ENCODE measurements at regions of chr5 and their contacts with region 1.

Region 1: GRCh38 chr5:149990518-149991376 is 9.7 kb downstream of the TIGD6 start:
- H3K4me3 ChIP-seq: no peak overlapping the region
- H3K27ac ChIP-seq: no peak overlapping the region
- H3K4me1 ChIP-seq: 0 out of 2 replicates have a peak, but pooled peaks cover 2% of the 10 kb centered on the region
- CTCF ChIP-seq: peak; percentile 73; the same call in 1 of the 2 replicates

Region 2: DNA sequence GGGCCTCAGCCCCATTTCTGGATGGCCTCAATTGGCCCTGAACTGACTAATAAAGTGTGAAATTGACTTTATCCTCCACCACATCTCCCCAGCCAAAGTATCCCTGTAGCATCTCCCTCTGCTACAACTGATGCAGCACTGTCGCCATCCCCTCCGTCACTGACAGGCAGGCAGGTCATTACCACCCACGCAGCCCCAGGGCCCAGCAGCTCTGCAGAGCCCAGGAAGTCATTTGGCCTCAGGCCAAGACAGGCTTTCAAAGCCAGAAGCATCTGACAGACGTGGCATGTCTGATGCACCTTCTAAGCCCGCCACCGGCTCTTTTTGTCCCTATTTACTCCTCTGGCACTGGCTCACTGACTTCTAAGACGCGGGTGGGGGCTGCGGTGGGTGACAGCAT is 344.2 kb before region 1 on chr5:
- CTCF ChIA-PET with region 1: interaction called, 10 read pairs
- POLR2A ChIA-PET with region 1: no interaction called
- H3K4me3 ChIP-seq: no peak overlapping the region
- H3K27ac ChIP-seq: no peak overlapping the region
- H3K4me1 ChIP-seq: peaks cover 4% of the 10 kb centered on the region; the same call in 1 of the 2 replicates
- CTCF ChIP-seq: no peak

Region 3: DNA sequence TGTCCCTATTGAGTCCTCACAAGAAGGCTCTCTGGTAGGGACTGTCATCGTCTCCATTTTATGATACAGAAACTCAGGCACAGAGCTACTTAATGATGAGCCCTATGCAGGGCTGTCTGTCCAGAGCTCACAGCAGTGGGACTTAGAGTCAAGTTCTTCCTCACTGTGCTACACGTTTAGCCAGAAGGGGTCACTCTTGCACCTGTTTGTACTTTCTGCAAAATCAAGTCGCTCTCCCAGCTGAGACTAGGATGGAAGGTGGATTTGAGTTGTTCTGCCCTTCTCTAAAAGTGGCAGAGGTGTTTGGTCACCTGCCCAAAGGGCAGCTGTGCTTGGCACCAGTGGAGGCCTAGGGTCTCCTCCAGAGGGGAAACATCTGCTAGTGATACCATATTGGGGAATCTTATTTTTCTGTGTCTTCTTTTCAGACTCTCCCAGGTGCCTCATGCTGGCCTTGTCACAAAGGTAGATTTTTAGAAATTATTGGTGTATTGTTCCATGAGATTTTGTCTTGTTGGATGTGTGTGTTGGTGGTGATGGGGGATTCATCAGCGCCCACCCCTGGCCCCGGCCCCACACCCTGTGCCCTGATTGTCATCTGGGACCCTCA is 156.4 kb before region 1 on chr5:
- CTCF ChIA-PET with region 1: interaction called, 234 read pairs
- POLR2A ChIA-PET with region 1: no interaction called
- H3K4me3 ChIP-seq: no peak overlapping the region
- H3K27ac ChIP-seq: no peak overlapping the region
- H3K4me1 ChIP-seq: no peaks in the 10 kb centered on the region
- CTCF ChIP-seq: peak; percentile 56

Region 4: DNA sequence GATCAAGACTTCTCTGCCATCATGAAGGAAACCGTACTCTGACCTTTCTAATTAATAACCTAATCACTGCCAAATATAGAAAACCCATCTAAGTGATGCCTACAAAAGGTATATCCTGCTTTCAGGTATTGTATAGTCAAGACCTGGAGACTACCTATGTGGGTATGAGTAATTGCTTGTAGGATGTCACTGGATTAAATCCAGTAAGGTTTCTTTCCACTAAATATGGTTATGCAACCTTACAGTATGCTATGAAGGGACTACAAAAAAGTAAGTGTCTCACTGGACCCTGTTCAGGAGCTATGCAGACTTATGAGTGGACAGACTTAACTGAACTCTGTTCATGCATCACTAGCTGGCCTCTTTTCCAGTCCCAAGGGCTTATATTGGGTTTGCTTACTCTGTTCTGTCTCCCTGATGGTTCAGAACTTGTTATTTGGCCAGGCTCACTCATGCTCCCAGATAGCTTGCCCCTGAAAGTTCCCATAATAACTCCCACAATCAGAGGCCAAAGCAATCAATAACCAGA is 97.3 kb before region 1 on chr5:
- CTCF ChIA-PET with region 1: interaction called, 10 read pairs
- POLR2A ChIA-PET with region 1: no interaction called
- H3K4me3 ChIP-seq: no peak overlapping the region
- H3K27ac ChIP-seq: no peak overlapping the region
- H3K4me1 ChIP-seq: no peaks in the 10 kb centered on the region
- CTCF ChIP-seq: no peak

Region 5: GRCh38 chr5:149969181-149969930 is 21.4 kb before region 1 on chr5:
- CTCF ChIA-PET with region 1: interaction called, 15 read pairs
- POLR2A ChIA-PET with region 1: no interaction called
- H3K4me3 ChIP-seq: no peak overlapping the region
- H3K27ac ChIP-seq: no peak overlapping the region
- H3K4me1 ChIP-seq: no peaks in the 10 kb centered on the region
- CTCF ChIP-seq: no peak

Region 6: GRCh38 chr5:150006318-150006717 is 15.6 kb after region 1 on chr5:
- CTCF ChIA-PET with region 1: interaction called, 10 read pairs
- POLR2A ChIA-PET with region 1: no interaction called
- H3K4me3 ChIP-seq: no peak overlapping the region
- H3K27ac ChIP-seq: no peak overlapping the region
- H3K4me1 ChIP-seq: peaks cover 6% of the 10 kb centered on the region
- CTCF ChIP-seq: no peak